Activated T-helper 1 cell treated with anti-CD3 and anti-CD28 coated beads, Interleukin-12 subunit alpha, Interleukin-12 subunit beta, Interleukin-2, Interleukin-4 antibody, amounts not matched to agents 30 ng/mL and 10 ng/mL and 1 ng/mL, durations not matched to agents 14 hours and 24 hours and 36 hours (primary cell): ENCODE measurements at regions of chr11 and their contacts with region 1.

Region 1: DNA sequence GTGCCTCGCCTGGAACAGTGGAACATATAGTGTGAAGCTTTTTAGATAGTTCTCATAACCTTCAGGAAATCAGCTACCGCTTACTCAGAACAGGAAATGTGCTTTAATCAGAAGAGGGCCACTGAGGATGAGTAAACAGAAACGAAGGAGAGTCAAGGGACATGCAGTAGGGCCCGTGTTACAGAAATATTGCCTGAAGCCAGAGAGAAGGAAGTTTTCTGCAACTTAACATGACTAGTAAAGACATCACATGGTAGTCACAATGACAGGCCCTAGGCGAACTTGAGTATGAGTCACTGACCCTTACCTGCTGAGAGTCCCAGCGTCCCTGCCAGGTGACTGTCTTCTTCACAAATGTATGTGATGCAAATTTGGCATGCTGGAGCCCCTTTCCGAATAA is 39.4 kb downstream of the CARD18 start:
- DNase-seq: no peak
- H3K4me3 Mint-ChIP-seq: peak overlapping the region; percentile 90
- H3K27ac Mint-ChIP-seq: peak overlapping the region; percentile 95
- H3K4me1 Mint-ChIP-seq: peaks cover 33% of the 10 kb centered on the region
- H3K27me3 Mint-ChIP-seq: peaks cover 1% of the 10 kb centered on the region

Region 2: GRCh38 chr11:104912102-104912501 is 188.1 kb before region 1 on chr11:
- intact Hi-C with region 1: loop called (anchors 5 kb)
- DNase-seq: no peak
- H3K4me3 Mint-ChIP-seq: no peak overlapping the region
- H3K27ac Mint-ChIP-seq: no peak overlapping the region
- H3K4me1 Mint-ChIP-seq: peaks cover 20% of the 10 kb centered on the region
- H3K27me3 Mint-ChIP-seq: no peaks in the 10 kb centered on the region

Region 3: GRCh38 chr11:104944076-104944475 is 156.1 kb before region 1 on chr11:
- intact Hi-C with region 1: no loop called
- DNase-seq: no peak
- H3K4me3 Mint-ChIP-seq: no peak overlapping the region
- H3K27ac Mint-ChIP-seq: no peak overlapping the region
- H3K4me1 Mint-ChIP-seq: peaks cover 6% of the 10 kb centered on the region
- H3K27me3 Mint-ChIP-seq: no peaks in the 10 kb centered on the region

Region 4: GRCh38 chr11:104968355-104968855 is 131.8 kb before region 1 on chr11 and contains the start of gene CASP4:
- intact Hi-C with region 1: loop called (anchors 5 kb)
- DNase-seq: no peak
- H3K4me3 Mint-ChIP-seq: peak within 1 kb of the TSS; percentile 87
- H3K27ac Mint-ChIP-seq: peak within 1 kb of the TSS; percentile 85
- H3K4me1 Mint-ChIP-seq: peaks cover 50% of the 10 kb centered on the region
- H3K27me3 Mint-ChIP-seq: peaks cover 2% of the 10 kb centered on the region
- total RNA-seq, gene CASP4: 32.9 and 34.0 TPM in 2 replicates